Cardiac septum (tissue), 1 donor: ENCODE measurements at regions of chr3 and their contacts with region 1.

Region 1: GRCh38 chr3:28726840-28727239 is 378.2 kb upstream of the AZI2 start:
- DNase-seq: no peak

Region 2: DNA sequence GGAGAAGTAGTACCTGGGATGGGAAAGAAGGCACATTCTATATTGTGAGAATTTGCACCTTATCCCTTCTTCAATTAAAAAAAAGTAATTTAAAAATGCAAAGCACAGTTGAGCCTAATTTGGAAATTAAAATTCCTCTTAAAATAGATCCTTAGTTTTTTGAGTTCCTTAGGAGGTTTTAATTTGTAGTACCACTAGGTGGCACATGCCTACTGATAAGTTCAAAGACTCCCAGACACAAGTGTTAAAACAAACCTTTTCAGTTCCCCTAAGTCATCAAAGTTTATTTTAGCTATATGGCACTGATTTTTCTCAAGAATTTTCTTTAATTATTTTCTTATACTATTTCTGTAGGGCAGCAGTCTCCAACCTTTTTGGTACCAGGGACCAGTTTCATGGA is 250.6 kb before region 1 on chr3:
- intact Hi-C with region 1: loop called (anchors 10 kb)
- DNase-seq: no peak

Region 3: DNA sequence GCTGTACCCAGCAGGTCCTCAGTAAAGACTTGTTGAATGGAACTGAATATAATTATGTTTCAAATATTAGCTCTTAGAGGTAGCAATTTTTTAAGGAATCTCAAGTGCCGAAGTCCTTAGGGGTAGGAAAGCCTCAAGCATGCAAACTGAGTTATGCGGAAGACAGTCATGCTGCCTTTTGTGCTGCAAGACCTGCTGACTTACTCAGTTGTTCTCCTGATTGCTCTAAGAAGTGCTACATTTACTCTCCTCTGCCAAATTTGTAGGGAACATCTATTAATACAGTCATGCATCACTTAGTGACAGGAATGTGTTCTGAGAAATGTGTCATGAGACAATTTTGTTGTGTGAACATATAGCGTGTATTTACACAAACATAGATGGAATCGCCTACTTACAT is 52.6 kb before region 1 on chr3:
- intact Hi-C with region 1: loop called (anchors 5 kb)
- DNase-seq: no peak

Region 4: DNA sequence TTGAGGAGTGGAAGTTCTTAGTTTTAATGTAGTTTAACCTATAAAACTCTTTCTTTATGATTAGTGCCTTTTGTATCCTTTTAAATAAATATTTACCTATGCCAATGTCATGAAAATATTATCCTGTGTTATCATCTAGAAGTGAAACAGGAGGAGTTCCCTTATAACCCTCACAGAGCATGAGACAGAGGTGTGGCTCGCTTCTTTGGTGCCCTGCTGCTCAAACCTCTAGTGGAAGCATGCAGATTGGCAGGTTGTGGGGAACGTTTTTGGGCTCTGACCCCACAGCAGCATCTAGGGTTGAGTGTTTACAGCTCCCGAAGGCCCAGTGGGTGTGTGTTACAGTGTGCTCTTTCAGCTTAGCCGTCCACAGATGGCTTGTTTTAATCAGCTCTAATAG is 81.2 kb after region 1 on chr3:
- intact Hi-C with region 1: no loop called
- DNase-seq: no peak